Stomach (tissue), 19 donors: ENCODE measurements at regions of chr19 and their contacts with region 1.

Region 1: DNA sequence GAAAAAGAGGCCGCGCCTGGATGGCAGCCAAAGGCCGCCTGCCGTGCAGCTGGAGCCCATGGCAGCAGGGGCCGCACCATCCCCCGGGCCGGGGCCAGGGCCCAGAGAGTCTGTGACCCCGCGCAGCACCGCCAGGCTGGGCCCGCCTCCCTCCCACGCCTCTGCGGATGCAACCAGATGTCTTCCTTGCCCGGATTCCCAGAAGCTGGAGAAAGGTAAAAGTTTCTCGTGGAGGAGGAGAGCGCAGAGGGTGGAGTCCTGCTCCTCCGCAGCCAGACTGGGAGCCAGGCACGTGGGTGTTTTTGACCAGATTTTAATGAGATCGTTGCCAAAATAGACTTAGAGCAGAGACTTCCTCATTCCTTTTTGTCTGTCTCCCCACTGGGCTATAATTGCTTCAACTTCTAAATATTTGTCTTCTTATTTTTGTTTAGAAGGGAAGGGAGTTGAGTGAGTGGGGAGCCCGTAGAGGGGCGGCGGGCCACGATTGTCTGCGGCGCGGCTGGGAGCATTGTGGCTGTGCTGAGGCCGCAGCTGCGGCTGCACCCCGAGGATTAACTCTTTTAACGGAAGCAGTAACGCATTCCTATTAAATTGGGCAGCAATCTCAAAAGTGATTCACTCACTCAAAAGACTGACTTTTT is 22.8 kb upstream of the NDUFS7 start:
- DNase-seq: peak in 1 of 2 donors; percentile 85
- H3K4me3 ChIP-seq: peak overlapping the region; percentile 9 to 28 (median 20)
- H3K27ac ChIP-seq: peak overlapping the region; percentile 43 to 78 (median 65)
- H3K4me1 ChIP-seq: peaks cover 21 to 44% (median 29%) of the 10 kb centered on the region in 4 donors
- H3K27me3 ChIP-seq: no peaks in the 10 kb centered on the region
- CTCF ChIP-seq: no peak
- EP300 ChIP-seq: no peak
- POLR2A ChIP-seq: no peak

Region 2: DNA sequence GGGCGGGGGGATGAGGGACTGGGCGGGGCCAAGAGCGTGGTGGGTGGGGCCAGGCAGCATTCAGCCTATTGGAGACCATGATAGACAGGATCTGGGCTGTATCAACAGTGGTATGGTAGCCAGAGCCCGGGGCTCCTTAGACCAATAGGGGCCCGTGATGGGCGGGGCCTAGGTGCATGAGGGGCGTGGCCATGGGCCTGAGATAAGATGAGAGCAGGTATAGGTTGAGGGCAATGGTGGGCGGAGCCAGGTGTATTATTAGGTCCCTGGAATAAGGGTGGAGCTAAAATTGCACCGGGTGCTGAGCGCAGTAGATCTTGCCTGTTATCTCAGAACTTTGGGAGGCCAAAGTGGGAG is 315.7 kb before region 1 on chr19:
- intact Hi-C with region 1: no loop called
- DNase-seq: peak; percentile 25 to 45
- H3K4me3 ChIP-seq: no peak overlapping the region
- H3K27ac ChIP-seq: no peak overlapping the region
- H3K4me1 ChIP-seq: peaks cover 17 to 37% (median 29%) of the 10 kb centered on the region in 4 donors
- H3K27me3 ChIP-seq: peaks cover 0 to 18% (median 0%) of the 10 kb centered on the region in 3 donors
- CTCF ChIP-seq: no peak
- EP300 ChIP-seq: no peak
- POLR2A ChIP-seq: no peak

Region 3: GRCh38 chr19:1279782-1280341 is 81.1 kb before region 1 on chr19:
- intact Hi-C with region 1: loop called (anchors 10 kb)
- DNase-seq: peak; percentile 87 to 95
- H3K4me3 ChIP-seq: no peak overlapping the region
- H3K27ac ChIP-seq: no peak overlapping the region
- H3K4me1 ChIP-seq: peaks cover 11 to 56% (median 36%) of the 10 kb centered on the region in 4 donors
- H3K27me3 ChIP-seq: peaks cover under 1 to 31% (median 22%) of the 10 kb centered on the region in 3 donors
- CTCF ChIP-seq: peak in 5 of 7 experiments; percentile 87 to 94 (median 93)
- EP300 ChIP-seq: no peak
- POLR2A ChIP-seq: no peak